ENCODE measurements at regions of chr11 and their contacts with region 1.

Region 1: GRCh38 chr11:118956094-118956846 is at the start of gene UPK2:
- DNase-seq: peak; percentile 88 to 94
- ATAC-seq: peak; percentile 92 to 100 (median 99)
- H3K4me3 ChIP-seq: no peak within 1 kb of the TSS
- H3K4me3 Mint-ChIP-seq: no peak within 1 kb of the TSS
- H3K27ac ChIP-seq: no peak within 1 kb of the TSS
- H3K27ac Mint-ChIP-seq: no peak within 1 kb of the TSS
- H3K4me1 ChIP-seq: peaks cover 3% of the 10 kb centered on the region
- H3K4me1 Mint-ChIP-seq: peaks cover 0 to 9% of the 10 kb centered on the region in 2 donors
- H3K27me3 ChIP-seq: no peaks in the 10 kb centered on the region
- H3K27me3 Mint-ChIP-seq: peaks cover 4 to 18% of the 10 kb centered on the region in 2 donors
- CTCF ChIP-seq: peak; percentile 90
- total RNA-seq, gene UPK2: 0.40 to 0.41 TPM in 2 of 3 donors, not detected in the other

Region 2: GRCh38 chr11:118659314-118659952 is 296.8 kb before region 1 on chr11:
- intact Hi-C with region 1: loop called (anchors 1 kb)
- DNase-seq: peak; percentile 85 to 90
- ATAC-seq: peak; percentile 93 to 100 (median 100)
- H3K4me3 ChIP-seq: no peak overlapping the region
- H3K4me3 Mint-ChIP-seq: no peak overlapping the region
- H3K27ac ChIP-seq: no peak overlapping the region
- H3K27ac Mint-ChIP-seq: no peak overlapping the region
- H3K4me1 ChIP-seq: peaks cover 8% of the 10 kb centered on the region
- H3K4me1 Mint-ChIP-seq: peaks cover 0 to 7% of the 10 kb centered on the region in 2 donors
- H3K27me3 ChIP-seq: no peaks in the 10 kb centered on the region
- H3K27me3 Mint-ChIP-seq: no peaks in the 10 kb centered on the region
- CTCF ChIP-seq: peak; percentile 97

Region 3: GRCh38 chr11:118907051-118908042 is 48.9 kb before region 1 on chr11:
- intact Hi-C with region 1: loop called (anchors 1 kb)
- DNase-seq: peak; percentile 84 to 92
- ATAC-seq: peak; percentile 48 to 80 (median 61)
- H3K4me3 ChIP-seq: no peak overlapping the region
- H3K4me3 Mint-ChIP-seq: peak overlapping the region; percentile 6
- H3K27ac ChIP-seq: peak overlapping the region; percentile 56
- H3K27ac Mint-ChIP-seq: peak overlapping the region; percentile 86 to 90
- H3K4me1 ChIP-seq: peaks cover 48% of the 10 kb centered on the region
- H3K4me1 Mint-ChIP-seq: peaks cover 38 to 51% of the 10 kb centered on the region in 2 donors
- H3K27me3 ChIP-seq: no peaks in the 10 kb centered on the region
- H3K27me3 Mint-ChIP-seq: no peaks in the 10 kb centered on the region
- CTCF ChIP-seq: peak; percentile 79

Region 4: GRCh38 chr11:118939953-118940598 is 16.2 kb before region 1 on chr11:
- intact Hi-C with region 1: no loop called
- DNase-seq: peak in 1 of 2 donors; percentile 76
- ATAC-seq: peak; percentile 28 to 42 (median 42)
- H3K4me3 ChIP-seq: no peak overlapping the region
- H3K4me3 Mint-ChIP-seq: no peak overlapping the region
- H3K27ac ChIP-seq: no peak overlapping the region
- H3K27ac Mint-ChIP-seq: no peak overlapping the region
- H3K4me1 ChIP-seq: peaks cover 9% of the 10 kb centered on the region
- H3K4me1 Mint-ChIP-seq: peaks cover 0 to 5% of the 10 kb centered on the region in 2 donors
- H3K27me3 ChIP-seq: no peaks in the 10 kb centered on the region
- H3K27me3 Mint-ChIP-seq: peaks cover 16 to 24% of the 10 kb centered on the region in 2 donors
- CTCF ChIP-seq: no peak

Measured in natural killer cell (primary cell).